Adrenal gland (tissue), 19 donors: ENCODE measurements at regions of chr6 and their contacts with region 1.

Region 1: DNA sequence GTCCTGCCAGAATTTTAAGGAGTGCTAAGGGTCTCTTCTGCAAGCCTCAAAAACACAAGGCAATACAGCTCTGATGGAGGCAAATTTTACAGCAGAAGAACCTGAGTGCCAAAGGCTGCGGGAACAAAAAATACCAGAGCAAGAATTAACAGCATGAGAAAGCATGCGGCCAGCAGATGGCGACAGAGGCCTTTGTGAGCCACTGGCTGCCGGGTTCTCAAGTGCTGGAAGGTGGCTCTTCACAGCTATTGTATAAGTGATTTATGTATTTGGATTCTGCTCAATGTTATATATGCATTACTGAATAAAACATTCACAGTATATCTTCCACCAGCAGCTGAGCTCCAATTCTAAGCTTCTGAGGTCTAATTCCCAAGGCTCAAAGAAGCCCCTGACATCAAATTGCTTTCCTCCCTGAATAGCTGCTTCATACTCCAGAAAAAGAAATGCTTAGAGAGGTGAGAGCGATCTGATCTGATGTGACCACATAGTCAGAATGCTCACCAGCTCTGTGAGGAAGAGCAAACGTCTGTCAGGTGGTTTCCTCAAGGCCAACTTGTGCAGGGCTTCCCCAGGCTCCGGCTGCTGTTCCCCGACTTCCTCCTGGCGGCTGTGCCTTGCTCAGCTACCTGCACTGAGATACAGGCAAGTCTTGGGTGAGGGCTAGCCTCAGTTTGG is 58.6 kb downstream of the PPP1R3G start:
- DNase-seq: peak; percentile 76 to 97 (median 90)
- H3K4me3 ChIP-seq: no peak overlapping the region
- H3K27ac ChIP-seq: no peak overlapping the region
- H3K4me1 ChIP-seq: peaks cover 0 to 4% of the 10 kb centered on the region in 2 donors
- H3K27me3 ChIP-seq: no peaks in the 10 kb centered on the region
- CTCF ChIP-seq: peak; percentile 87 to 95 (median 92)
- POLR2A ChIP-seq: no peak

Region 2: DNA sequence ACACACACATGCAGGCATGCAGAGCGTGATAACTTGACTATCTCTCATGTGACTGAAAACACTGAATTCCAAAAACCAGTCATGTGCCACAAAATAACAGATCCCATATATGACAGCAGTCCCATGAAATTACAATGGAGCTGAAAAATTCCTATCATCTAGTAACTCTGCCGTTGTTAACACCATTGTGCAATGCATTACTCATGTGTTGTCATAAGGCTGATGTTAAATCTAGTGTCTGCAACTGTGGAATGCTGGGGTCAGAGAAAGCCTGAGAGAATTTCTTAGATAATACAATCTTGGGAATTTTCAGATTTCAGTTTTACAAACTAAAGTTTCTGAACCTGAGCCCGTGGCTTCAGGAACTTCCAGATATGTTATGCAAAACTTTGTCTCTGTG is 46.7 kb after region 1 on chr6:
- intact Hi-C with region 1: no loop called
- DNase-seq: peak in 3 of 7 donors; percentile 34 to 49 (median 36)
- H3K4me3 ChIP-seq: no peak overlapping the region
- H3K27ac ChIP-seq: no peak overlapping the region
- H3K4me1 ChIP-seq: peaks cover 0 to 29% of the 10 kb centered on the region in 2 donors
- H3K27me3 ChIP-seq: no peaks in the 10 kb centered on the region
- CTCF ChIP-seq: no peak
- POLR2A ChIP-seq: no peak

Region 3: DNA sequence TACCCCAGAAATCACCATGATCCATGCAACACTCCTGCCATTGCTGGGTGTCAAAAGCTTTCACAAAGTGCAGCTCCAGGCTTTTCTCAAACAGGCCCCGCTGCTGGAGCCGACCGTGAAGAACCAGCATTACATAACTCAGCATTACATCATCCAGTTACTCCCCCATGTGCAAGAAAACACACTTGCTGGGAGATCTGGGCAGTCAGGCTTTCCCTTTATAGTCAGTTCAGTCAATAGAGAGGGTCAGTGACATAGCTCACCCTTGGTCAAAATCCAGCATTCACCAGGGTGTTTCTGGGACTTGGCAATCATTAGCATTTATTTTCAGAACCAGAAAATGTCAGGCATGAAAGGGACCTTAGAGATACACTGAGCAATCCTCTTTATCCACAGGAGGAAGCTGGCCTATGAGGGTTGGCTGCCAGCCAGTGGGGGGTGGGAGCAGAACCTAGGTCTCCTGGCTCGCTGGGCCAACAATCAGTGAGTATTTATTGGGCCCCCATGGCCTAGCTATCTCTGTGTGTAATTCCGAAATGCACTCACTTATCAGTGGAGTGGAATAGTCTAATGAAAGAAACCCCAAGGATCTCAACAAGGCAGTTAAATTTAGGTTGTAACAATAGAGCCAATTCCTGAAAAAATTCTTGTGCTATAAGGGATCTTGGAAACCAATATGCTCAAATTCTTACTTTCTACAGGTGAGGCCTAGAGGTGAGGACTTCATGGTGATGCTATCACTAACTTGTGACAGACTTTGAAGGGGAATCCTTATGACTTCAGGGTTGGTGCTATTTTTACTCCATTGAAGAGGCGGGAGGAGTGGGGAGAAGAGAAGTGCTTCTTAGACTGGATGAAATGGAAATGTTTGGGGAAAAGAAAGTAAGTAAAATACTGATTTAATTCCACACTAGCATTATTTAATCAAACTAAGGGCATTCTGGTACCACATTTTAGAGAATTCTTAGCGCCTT is 62.4 kb after region 1 on chr6:
- intact Hi-C with region 1: loop called (anchors 10 kb)
- DNase-seq: peak; percentile 54 to 86 (median 66)
- H3K4me3 ChIP-seq: no peak overlapping the region
- H3K27ac ChIP-seq: peak overlapping the region in 4 of 5 donors; percentile 54 to 80 (median 68)
- H3K4me1 ChIP-seq: peaks cover 13 to 22% of the 10 kb centered on the region in 2 donors
- H3K27me3 ChIP-seq: no peaks in the 10 kb centered on the region
- CTCF ChIP-seq: no peak
- POLR2A ChIP-seq: no peak

Region 4: DNA sequence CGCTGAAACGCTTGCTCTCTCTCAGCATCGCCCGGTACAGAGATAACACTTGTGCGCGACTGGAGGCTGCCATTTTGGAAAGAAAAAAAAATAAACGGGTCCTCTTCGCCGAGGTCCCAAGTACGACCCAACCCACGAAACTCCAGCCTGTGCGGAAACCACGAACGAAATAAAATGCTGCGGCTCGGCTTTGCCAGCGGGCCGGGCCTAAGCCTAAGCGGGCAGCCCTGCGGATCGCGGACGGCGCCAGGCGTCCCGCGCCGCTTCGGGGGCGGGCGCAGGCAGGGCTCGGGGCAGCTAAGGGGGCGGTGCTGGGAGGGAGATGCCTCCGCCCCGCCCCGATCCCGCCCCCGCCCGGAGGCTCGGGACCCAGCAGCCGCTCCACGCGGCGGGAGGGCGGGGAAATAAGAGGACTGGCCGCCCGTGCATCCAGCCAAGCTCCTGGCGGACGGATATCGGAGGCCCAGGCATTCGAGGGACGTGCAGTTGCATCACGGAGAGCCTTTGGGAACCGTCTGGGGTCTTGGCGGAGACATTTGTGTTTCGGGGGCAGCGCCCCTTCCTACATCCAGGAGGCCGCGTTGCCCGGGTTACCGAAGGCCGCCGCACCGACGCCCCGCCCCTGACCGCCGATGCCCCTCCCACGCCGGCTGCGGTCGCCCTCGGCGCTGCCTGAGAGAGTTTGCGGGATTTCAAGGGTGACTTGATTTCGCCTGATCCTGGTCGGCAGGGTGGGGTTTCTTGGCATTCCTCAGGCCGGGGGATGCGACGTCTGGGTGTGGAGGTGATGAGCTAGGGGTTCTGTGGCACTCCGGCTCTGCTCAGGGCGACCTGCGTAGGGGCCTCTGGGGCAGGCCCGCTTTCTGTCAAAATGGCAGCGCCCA is 117.1 kb after region 1 on chr6 and contains the starts of genes FARS2 and LYRM4:
- intact Hi-C with region 1: no loop called
- DNase-seq: peak; percentile 79 to 93 (median 91)
- H3K4me3 ChIP-seq: peak within 1 kb of the TSS; percentile 79 to 95 (median 80)
- H3K27ac ChIP-seq: peak within 1 kb of the TSS; percentile 93 to 99 (median 97)
- H3K4me1 ChIP-seq: peaks cover 8 to 19% of the 10 kb centered on the region in 2 donors
- H3K27me3 ChIP-seq: no peaks in the 10 kb centered on the region
- CTCF ChIP-seq: peak in 3 of 6 experiments; percentile 12 to 65 (median 55)
- POLR2A ChIP-seq: peak; percentile 37 to 65
- total RNA-seq, gene FARS2: 18.3 to 55.2 (median 20.0) TPM
- total RNA-seq, gene LYRM4: 24.5 to 65.1 (median 31.9) TPM

Region 5: GRCh38 chr6:5398530-5398929 is 254.8 kb after region 1 on chr6:
- intact Hi-C with region 1: loop called (anchors 5 to 10 kb)
- DNase-seq: no peak
- H3K4me3 ChIP-seq: no peak overlapping the region
- H3K27ac ChIP-seq: no peak overlapping the region
- H3K4me1 ChIP-seq: no peaks in the 10 kb centered on the region
- H3K27me3 ChIP-seq: no peaks in the 10 kb centered on the region
- CTCF ChIP-seq: peak; percentile 14 to 52 (median 34)
- POLR2A ChIP-seq: no peak